ENCODE measurements at regions of chr4 and their contacts with region 1.

Region 1: GRCh38 chr4:140884431-140885058 is 128.4 kb upstream of the TBC1D9 start:
- DNase-seq: peak; percentile 80

Region 2: GRCh38 chr4:141133146-141133998 is 248.8 kb after region 1 on chr4 and contains the start of gene RNF150:
- in situ Hi-C with region 1: loop called (anchors 25 kb)
- DNase-seq: peak; percentile 89
- total RNA-seq, gene RNF150: 15.3 and 16.3 TPM in 2 replicates